ENCODE measurements at regions of chr18 and their contacts with region 1.

Region 1: DNA sequence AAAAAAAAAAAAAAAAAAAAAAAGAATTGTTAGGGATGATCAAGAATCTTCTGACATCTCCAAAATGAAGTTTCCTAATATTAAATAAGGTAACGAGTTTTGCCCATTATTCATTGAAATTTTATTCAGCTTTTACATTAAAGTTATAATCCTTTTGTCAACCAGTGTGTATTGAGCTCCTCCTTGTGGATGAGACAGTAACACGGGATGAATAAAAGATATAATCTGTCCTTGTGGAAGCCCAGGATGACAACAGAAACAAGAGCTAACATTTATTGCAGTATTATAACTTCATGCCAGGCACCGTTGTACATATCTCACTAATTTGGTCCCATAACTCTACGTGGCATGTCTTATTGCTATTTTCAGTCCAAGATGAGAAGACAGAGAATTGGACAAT is 33.4 kb upstream of the SERPINB7 start:
- DNase-seq: peak; percentile 65
- H3K4me3 Mint-ChIP-seq: no peak overlapping the region
- H3K27ac Mint-ChIP-seq: no peak overlapping the region
- H3K4me1 Mint-ChIP-seq: peaks cover 5% of the 10 kb centered on the region
- H3K27me3 Mint-ChIP-seq: no peaks in the 10 kb centered on the region
- CTCF ChIP-seq: peak; percentile 64

Region 2: GRCh38 chr18:63578357-63578958 is 163.3 kb before region 1 on chr18:
- CTCF ChIA-PET with region 1: interaction called, 177 read pairs
- POLR2A ChIA-PET with region 1: no interaction called
- intact Hi-C with region 1: loop called (anchors 2 kb)
- DNase-seq: peak; percentile 67
- H3K4me3 Mint-ChIP-seq: no peak overlapping the region
- H3K27ac Mint-ChIP-seq: no peak overlapping the region
- H3K4me1 Mint-ChIP-seq: peaks cover 15% of the 10 kb centered on the region
- H3K27me3 Mint-ChIP-seq: no peaks in the 10 kb centered on the region
- CTCF ChIP-seq: peak; percentile 75

Region 3: DNA sequence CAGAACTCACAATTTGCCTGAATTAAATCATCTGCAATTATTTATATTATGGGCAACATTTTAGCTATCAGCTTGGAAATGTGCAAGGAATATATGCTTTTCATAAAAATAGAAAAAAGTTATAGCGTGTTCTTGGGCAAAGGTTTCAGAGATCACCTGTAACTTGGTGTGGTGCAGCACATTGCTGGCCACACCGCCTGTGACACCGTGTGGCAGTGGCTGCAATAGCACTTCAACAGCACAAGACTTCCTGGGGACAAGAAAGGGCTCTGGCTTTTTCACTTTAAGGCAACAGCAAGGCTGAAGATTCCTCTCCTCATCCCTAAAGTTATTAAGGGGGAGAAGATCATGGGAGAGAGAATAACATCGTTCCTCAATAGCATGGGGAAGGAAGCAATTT is 65.2 kb before region 1 on chr18:
- CTCF ChIA-PET with region 1: interaction called, 20 read pairs
- POLR2A ChIA-PET with region 1: interaction called, 3 read pairs
- intact Hi-C with region 1: loop called (anchors 1 kb)
- DNase-seq: peak; percentile 50
- H3K4me3 Mint-ChIP-seq: no peak overlapping the region
- H3K27ac Mint-ChIP-seq: no peak overlapping the region
- H3K4me1 Mint-ChIP-seq: peaks cover 13% of the 10 kb centered on the region
- H3K27me3 Mint-ChIP-seq: no peaks in the 10 kb centered on the region
- CTCF ChIP-seq: peak; percentile 37

Region 4: DNA sequence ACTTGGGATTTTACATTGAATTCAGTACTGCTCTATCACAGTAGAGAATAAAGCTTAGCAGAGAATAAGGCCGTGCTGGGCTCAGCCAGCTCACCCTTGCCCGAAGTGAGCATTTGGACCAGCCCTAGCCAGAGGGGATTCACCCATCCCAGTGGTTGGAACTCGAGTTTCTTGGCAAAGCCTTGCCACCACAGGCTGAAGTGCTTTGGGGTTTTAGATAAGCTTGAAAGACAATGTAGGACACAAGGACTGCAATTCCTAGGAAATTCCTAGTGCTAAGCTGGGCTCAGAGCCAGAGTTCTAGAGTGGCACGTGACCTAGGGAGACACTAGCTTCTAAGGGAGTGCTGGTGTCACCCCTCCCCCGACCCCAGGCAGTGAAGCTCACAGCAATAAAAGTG is 11.0 kb before region 1 on chr18:
- CTCF ChIA-PET with region 1: interaction called, 14 read pairs
- POLR2A ChIA-PET with region 1: interaction called, 7 read pairs
- intact Hi-C with region 1: no loop called
- DNase-seq: peak; percentile 76
- H3K4me3 Mint-ChIP-seq: peak overlapping the region; percentile 12
- H3K27ac Mint-ChIP-seq: peak overlapping the region; percentile 44
- H3K4me1 Mint-ChIP-seq: peaks cover 11% of the 10 kb centered on the region
- H3K27me3 Mint-ChIP-seq: no peaks in the 10 kb centered on the region
- CTCF ChIP-seq: no peak

Region 5: GRCh38 chr18:63837556-63837955 is 95.8 kb after region 1 on chr18:
- CTCF ChIA-PET with region 1: interaction called, 104 read pairs
- POLR2A ChIA-PET with region 1: no interaction called
- intact Hi-C with region 1: no loop called
- DNase-seq: no peak
- H3K4me3 Mint-ChIP-seq: no peak overlapping the region
- H3K27ac Mint-ChIP-seq: no peak overlapping the region
- H3K4me1 Mint-ChIP-seq: peaks cover 2% of the 10 kb centered on the region
- H3K27me3 Mint-ChIP-seq: no peaks in the 10 kb centered on the region
- CTCF ChIP-seq: no peak

Measured in MCF 10A (cell line).